Upper lobe of right lung (tissue), 1 donor: ENCODE measurements at regions of chr1 and their contacts with region 1.

Region 1: GRCh38 chr1:70509996-70510876 is 99.2 kb downstream of the CTH start:
- DNase-seq: no peak
- ATAC-seq: peak; percentile 89
- H3K4me3 ChIP-seq: no peak overlapping the region
- H3K27ac ChIP-seq: no peak overlapping the region
- H3K4me1 ChIP-seq: no peaks in the 10 kb centered on the region
- H3K27me3 ChIP-seq: no peaks in the 10 kb centered on the region
- CTCF ChIP-seq: peak; percentile 69

Region 2: GRCh38 chr1:70134148-70134547 is 376.1 kb before region 1 on chr1:
- intact Hi-C with region 1: loop called (anchors 10 kb)
- DNase-seq: no peak
- ATAC-seq: no peak
- H3K4me3 ChIP-seq: no peak overlapping the region
- H3K27ac ChIP-seq: no peak overlapping the region
- H3K4me1 ChIP-seq: no peaks in the 10 kb centered on the region
- H3K27me3 ChIP-seq: no peaks in the 10 kb centered on the region
- CTCF ChIP-seq: no peak